ENCODE measurements at regions of chr9 and their contacts with region 1.

Region 1: DNA sequence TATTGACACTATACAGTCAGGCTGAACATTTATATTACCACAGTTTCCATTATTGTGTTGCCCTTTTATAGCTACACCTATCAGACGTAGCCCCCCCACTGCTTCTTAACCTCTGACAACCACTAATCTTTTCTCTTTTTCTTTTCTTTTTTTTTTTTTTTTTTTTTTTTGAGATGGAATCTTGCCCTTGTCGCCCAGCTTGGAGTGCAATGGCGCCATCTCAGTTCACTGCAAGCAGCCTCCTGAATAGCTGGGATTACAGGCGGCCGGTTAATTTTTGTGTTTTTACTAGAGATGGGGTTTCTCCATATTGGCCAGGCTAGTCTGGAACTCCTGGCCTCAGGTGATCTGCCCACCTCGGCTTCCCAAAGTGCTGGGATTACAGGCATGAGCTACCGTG is 75.4 kb downstream of the UHRF2 start:
- DNase-seq: no peak
- H3K4me3 ChIP-seq: no peak overlapping the region
- H3K27ac ChIP-seq: no peak overlapping the region
- H3K27me3 ChIP-seq: no peaks in the 10 kb centered on the region
- CTCF ChIP-seq: no peak

Region 2: DNA sequence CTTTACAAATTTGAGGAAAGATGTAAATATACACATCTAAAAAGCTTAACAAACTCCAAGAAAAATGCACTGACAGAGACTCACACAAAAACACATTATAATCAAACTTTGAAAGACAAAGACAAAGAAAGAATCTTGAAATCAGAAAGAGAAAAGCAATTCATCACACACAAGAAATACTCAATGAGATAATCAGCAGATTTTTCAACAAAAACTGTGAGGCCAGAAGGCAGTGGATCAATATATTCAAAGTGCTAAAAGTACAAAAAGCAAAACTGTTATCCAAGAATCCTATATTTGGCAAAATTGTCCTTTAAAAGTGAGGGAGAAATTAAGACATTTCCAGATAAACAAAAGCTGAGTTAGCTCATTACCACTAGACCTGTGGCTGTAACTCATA is 154.1 kb before region 1 on chr9:
- CTCF ChIA-PET with region 1: no interaction called
- POLR2A ChIA-PET with region 1: no interaction called
- DNase-seq: no peak
- H3K4me3 ChIP-seq: no peak overlapping the region
- H3K27ac ChIP-seq: no peak overlapping the region
- H3K27me3 ChIP-seq: peaks cover 2% of the 10 kb centered on the region
- CTCF ChIP-seq: no peak

Region 3: DNA sequence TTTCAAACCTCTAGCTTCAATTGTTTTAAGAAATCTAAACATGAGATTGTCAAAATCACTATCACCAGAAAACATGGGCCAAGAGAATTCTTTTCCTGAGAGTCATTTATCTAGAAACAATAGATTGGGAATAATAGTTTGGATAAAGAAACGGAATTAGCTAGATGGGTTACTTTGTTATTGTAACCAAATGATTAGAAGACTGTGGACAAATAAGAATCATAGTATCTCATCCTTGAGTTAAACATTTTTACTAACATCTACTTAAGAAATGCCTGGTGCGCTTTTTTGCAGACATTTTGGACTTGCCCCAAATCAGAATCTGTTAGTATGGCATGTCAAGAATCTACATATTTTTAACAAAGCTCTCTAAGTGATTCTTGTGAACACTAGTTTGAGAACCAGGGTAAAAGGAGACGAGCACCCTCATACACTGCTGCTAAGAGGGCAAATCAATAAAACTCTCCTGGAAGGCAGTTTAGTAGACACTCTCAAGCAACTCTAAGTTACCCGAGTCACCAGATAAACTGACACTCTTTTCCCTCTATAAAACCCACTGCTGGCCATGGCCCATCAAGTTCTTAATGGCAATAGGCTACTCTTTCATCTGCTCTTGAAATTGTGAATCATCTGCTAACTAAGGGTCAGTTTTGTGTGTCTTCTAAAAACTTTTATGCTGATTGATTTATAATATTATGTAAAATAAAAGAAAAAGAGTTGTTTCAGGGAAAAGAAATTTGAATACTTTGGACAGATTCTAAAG is 121.1 kb before region 1 on chr9:
- CTCF ChIA-PET with region 1: no interaction called
- POLR2A ChIA-PET with region 1: no interaction called
- DNase-seq: peak; percentile 13
- H3K4me3 ChIP-seq: no peak overlapping the region
- H3K27ac ChIP-seq: no peak overlapping the region
- H3K27me3 ChIP-seq: no peaks in the 10 kb centered on the region
- CTCF ChIP-seq: no peak

Region 4: DNA sequence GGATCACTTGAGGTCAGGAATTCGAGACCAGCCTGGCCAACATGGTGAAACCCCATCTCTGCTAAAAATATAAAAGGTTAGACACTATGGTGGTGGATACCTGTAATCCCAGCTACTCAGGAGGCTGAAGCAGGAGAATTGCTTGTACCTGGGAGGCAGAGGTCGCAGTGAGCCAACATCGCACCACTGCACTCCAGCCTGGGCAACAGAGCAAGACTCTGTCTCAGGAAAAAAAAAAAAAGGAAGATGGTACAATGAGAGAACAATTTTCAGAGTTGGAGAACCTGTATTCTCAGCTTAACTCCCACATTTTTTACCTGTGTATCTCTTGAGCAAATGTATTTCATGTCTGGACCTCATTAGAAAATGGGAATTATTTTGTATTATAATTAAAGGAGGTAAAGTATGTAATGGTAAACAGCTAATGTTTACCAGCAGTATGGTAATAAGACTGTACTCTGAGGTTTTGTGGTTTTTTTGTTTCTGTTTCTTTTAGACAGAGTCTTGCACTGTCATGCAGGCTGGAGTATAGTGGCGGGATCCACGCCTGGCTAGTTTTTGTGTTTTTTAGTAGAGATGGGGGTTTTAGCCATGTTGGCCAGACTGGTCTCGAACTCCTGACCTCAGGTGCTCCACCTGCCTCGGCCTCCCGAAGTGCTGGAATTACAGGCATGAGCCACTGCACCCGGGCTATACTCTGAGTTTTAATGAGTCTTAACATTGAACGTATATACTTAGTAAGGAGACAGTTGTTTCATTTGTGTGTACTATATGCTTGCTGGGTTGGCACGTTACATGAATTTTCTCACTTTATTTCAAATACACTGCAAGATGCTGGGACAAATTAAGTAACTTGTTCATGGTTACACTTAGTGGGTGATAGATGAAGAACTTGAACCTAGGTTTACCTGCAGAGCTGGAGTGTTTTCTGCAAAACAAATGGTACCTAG is 59.2 kb before region 1 on chr9:
- CTCF ChIA-PET with region 1: interaction called, 6 read pairs
- POLR2A ChIA-PET with region 1: interaction called, 10 read pairs
- DNase-seq: no peak
- H3K4me3 ChIP-seq: no peak overlapping the region
- H3K27ac ChIP-seq: no peak overlapping the region
- H3K27me3 ChIP-seq: no peaks in the 10 kb centered on the region
- CTCF ChIP-seq: no peak

Region 5: GRCh38 chr9:6664204-6664680 is 175.8 kb after region 1 on chr9:
- CTCF ChIA-PET with region 1: no interaction called
- POLR2A ChIA-PET with region 1: no interaction called
- DNase-seq: no peak
- H3K4me3 ChIP-seq: no peak overlapping the region
- H3K27ac ChIP-seq: no peak overlapping the region
- H3K27me3 ChIP-seq: no peaks in the 10 kb centered on the region
- CTCF ChIP-seq: no peak